ENCODE measurements at regions of chr12 and their contacts with region 1.

Region 1: DNA sequence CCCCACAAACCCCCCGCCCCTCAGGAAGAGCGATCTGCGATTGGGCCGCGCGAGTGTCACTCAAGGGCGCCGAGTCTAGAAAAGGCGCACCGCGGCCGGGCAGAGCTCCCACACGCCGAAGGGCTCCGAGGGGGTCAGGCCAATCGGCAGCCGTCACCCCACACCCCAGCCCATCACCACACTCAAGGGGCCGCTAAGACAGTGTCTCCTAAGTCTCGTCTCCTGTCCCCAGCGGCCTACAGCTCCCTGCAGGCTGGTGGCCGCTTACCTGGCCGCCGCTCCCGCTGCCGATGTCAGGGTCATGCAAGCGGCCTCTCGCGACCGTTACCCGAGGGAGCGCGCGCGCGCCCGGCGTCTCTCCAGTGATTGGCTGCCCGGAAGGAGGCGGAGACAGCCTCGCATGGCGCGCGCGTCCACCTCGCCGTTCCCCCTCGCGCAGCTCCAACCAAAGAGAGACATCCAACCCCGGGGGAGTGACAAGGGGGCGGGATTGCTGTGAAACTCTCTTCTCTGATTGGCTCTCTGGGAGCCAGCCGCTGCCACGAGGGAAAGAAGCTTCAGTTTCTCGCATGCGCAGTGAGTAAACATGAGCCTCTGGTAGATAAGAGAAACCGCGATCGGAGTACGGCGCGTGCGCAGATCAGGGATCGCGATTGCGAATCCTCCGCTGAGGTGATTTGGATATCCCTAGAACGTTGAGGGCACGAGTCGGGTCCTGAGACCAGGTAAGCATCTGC is at the starts of genes MPHOSPH9 and MTRFR:
- DNase-seq: peak; percentile 100
- H3K4me3 Mint-ChIP-seq: peak within 1 kb of the TSS; percentile 96
- H3K27ac Mint-ChIP-seq: peak within 1 kb of the TSS; percentile 99
- H3K4me1 Mint-ChIP-seq: peaks cover 58% of the 10 kb centered on the region
- H3K27me3 Mint-ChIP-seq: no peaks in the 10 kb centered on the region
- total RNA-seq, gene MPHOSPH9: 111 to 114 TPM
- total RNA-seq, gene MTRFR: 27.7 to 27.8 TPM

Region 2: GRCh38 chr12:122318607-122319605 is 914.1 kb before region 1 on chr12:
- CTCF ChIA-PET with region 1: no interaction called
- intact Hi-C with region 1: no loop called
- DNase-seq: no peak
- H3K4me3 Mint-ChIP-seq: no peak overlapping the region
- H3K27ac Mint-ChIP-seq: no peak overlapping the region
- H3K4me1 Mint-ChIP-seq: no peaks in the 10 kb centered on the region
- H3K27me3 Mint-ChIP-seq: no peaks in the 10 kb centered on the region

Region 3: DNA sequence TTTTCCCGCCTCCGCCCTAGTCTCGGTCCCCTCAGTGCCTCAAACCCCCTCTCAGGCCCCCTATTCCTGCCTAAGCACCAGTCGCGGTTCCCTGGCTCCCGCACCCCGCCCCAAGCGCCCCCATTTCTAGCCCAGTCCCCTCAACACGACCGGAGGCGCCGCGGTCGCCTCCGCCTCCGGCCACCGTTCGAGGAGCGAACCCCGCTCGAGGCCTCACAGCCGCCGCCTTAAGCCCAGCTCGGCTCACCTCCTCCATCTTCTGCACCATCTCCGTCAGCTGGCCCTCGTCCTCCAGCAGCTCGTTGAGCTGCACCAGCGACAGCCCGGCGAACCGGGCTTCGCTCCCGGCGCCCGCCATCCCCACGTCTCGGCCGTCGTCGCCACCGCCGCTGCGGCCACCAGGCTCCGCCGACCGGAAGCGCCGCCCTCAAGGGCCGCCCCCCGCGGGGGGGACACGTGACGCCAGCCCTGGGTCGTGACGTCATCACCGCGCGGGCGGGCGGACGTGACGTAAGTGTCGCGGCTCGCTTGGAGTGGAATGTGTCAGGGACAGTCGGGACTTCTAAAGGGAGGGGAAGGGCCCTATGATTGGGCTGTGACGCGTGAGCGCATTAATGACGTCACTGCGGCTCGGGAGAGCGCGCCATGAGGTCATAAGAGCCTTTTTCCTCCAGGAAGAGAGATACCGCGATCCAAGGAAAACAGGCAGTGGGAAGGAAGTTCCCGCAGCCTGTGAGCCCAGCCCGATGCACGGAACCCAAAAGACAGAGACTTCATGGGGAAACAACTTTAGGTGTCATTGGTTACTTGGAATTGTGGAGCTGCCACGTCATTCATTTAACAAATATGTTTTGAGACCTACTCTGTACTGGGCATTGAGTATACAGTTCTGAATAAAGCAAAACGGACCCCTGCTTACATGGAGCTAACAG is 337.0 kb before region 1 on chr12 and contains the start of gene VPS37B:
- CTCF ChIA-PET with region 1: no interaction called
- intact Hi-C with region 1: loop called (anchors 5 kb)
- DNase-seq: peak; percentile 92
- H3K4me3 Mint-ChIP-seq: peak within 1 kb of the TSS; percentile 83
- H3K27ac Mint-ChIP-seq: peak within 1 kb of the TSS; percentile 83
- H3K4me1 Mint-ChIP-seq: peaks cover 86% of the 10 kb centered on the region
- H3K27me3 Mint-ChIP-seq: peaks cover 7% of the 10 kb centered on the region
- total RNA-seq, gene VPS37B: 15.6 TPM

Region 4: DNA sequence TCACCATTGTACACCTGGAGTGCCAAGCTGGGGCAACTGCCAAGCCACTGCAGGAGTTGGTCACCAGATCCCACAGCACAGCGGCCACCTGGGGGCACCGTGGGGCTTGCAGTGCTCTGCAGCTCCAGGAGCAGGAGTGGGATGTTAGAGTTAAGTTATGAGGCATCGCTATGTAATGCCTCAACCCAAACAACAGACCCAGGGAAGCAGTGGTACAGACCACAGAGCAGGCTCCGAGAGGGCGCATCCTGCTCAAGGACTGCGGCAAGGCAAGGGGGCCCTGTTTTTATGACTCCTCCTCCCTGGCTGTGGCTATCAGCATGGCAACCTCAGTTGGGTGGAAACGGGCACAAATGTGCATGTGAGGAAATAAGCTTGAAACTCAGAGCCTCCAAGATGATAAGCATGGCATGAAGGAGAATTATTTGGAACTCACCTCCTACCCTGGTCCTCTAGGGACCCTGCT is 189.4 kb before region 1 on chr12:
- CTCF ChIA-PET with region 1: interaction called, 44 read pairs
- intact Hi-C with region 1: loop called (anchors 1 kb)
- DNase-seq: peak; percentile 86
- H3K4me3 Mint-ChIP-seq: no peak overlapping the region
- H3K27ac Mint-ChIP-seq: peak overlapping the region; percentile 3
- H3K4me1 Mint-ChIP-seq: peaks cover 44% of the 10 kb centered on the region
- H3K27me3 Mint-ChIP-seq: no peaks in the 10 kb centered on the region

Region 5: GRCh38 chr12:123085730-123086487 is 147.1 kb before region 1 on chr12:
- CTCF ChIA-PET with region 1: no interaction called
- intact Hi-C with region 1: no loop called
- DNase-seq: peak; percentile 38
- H3K4me3 Mint-ChIP-seq: no peak overlapping the region
- H3K27ac Mint-ChIP-seq: no peak overlapping the region
- H3K4me1 Mint-ChIP-seq: peaks cover 14% of the 10 kb centered on the region
- H3K27me3 Mint-ChIP-seq: no peaks in the 10 kb centered on the region

Region 6: GRCh38 chr12:123200414-123200813 is 32.6 kb before region 1 on chr12:
- CTCF ChIA-PET with region 1: interaction called, 4 read pairs
- intact Hi-C with region 1: loop called (anchors 2 kb)
- DNase-seq: peak; percentile 48
- H3K4me3 Mint-ChIP-seq: no peak overlapping the region
- H3K27ac Mint-ChIP-seq: peak overlapping the region; percentile 79
- H3K4me1 Mint-ChIP-seq: peaks cover 19% of the 10 kb centered on the region
- H3K27me3 Mint-ChIP-seq: no peaks in the 10 kb centered on the region

Region 7: GRCh38 chr12:123382684-123383083 is 149.7 kb after region 1 on chr12:
- CTCF ChIA-PET with region 1: no interaction called
- intact Hi-C with region 1: loop called (anchors 1 kb)
- DNase-seq: no peak
- H3K4me3 Mint-ChIP-seq: peak overlapping the region; percentile 45
- H3K27ac Mint-ChIP-seq: peak overlapping the region; percentile 41
- H3K4me1 Mint-ChIP-seq: peaks cover 7% of the 10 kb centered on the region
- H3K27me3 Mint-ChIP-seq: no peaks in the 10 kb centered on the region